ENCODE measurements at regions of chrX and their contacts with region 1.

Region 1: GRCh38 chrX:41333744-41334259 is at the start of gene DDX3X:
- DNase-seq: peak; percentile 89
- ATAC-seq: peak; percentile 62
- H3K4me3 Mint-ChIP-seq: peak within 1 kb of the TSS; percentile 90
- H3K27ac Mint-ChIP-seq: peak within 1 kb of the TSS; percentile 99
- H3K4me1 Mint-ChIP-seq: peaks cover 20% of the 10 kb centered on the region
- H3K27me3 Mint-ChIP-seq: no peaks in the 10 kb centered on the region
- total RNA-seq, gene DDX3X: 118 to 207 TPM

Region 2: GRCh38 chrX:40580537-40581335 is 753.1 kb before region 1 on chrX and contains the start of gene ATP6AP2:
- CTCF ChIA-PET with region 1: no interaction called
- POLR2A ChIA-PET with region 1: interaction called, 3 read pairs
- intact Hi-C with region 1: loop called in 1 of 2 experiments (anchors 5 kb)
- DNase-seq: peak; percentile 94
- ATAC-seq: peak; percentile 98
- H3K4me3 Mint-ChIP-seq: peak within 1 kb of the TSS; percentile 77
- H3K27ac Mint-ChIP-seq: peak within 1 kb of the TSS; percentile 86
- H3K4me1 Mint-ChIP-seq: peaks cover 29% of the 10 kb centered on the region
- H3K27me3 Mint-ChIP-seq: no peaks in the 10 kb centered on the region
- total RNA-seq, gene ATP6AP2: 39.9 to 52.2 TPM

Region 3: DNA sequence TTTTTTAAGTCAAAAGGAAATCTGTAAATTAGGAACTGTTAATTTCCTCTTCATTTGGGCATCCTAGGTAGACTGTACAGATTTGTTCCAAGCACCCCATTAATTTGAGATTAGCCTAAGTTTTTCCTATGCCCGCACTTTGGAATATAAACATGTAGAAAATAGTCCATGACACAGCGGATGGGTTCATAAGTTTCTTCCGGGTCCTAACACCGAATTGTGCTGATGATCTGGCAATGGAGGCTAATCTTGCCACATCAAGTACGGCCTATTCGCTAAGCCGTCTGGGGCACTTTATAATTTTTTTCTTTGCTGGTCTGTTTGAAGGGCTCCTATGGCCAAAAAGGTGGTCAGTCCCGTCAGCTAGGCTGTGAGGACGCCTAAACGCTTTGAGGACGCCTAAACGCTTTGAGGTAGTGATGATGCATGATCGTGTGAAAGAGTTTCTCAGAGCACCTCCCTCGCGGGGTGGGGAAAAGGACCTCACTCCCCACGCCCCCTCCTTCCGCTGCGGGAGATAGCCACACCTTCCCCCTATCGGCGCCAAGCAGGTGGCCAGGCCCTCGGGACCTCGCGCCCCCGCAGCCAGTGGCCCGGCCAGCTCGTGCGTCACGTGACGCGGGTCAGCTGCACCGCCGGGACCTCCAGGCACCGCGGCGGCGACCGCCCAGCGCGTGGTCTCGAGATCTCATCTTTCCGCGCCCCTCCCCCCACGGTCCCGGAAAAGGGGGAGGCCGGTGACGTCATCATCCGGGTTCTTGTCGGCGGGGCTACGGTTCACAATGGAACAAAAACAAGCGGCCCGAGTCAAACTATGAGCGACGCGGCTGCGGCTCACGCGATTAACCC is 249.5 kb before region 1 on chrX:
- CTCF ChIA-PET with region 1: no interaction called
- POLR2A ChIA-PET with region 1: no interaction called
- intact Hi-C with region 1: loop called (anchors 1 to 5 kb)
- DNase-seq: peak; percentile 96
- ATAC-seq: peak; percentile 67
- H3K4me3 Mint-ChIP-seq: peak overlapping the region; percentile 80
- H3K27ac Mint-ChIP-seq: peak overlapping the region; percentile 99
- H3K4me1 Mint-ChIP-seq: peaks cover 14% of the 10 kb centered on the region
- H3K27me3 Mint-ChIP-seq: no peaks in the 10 kb centered on the region

Region 4: DNA sequence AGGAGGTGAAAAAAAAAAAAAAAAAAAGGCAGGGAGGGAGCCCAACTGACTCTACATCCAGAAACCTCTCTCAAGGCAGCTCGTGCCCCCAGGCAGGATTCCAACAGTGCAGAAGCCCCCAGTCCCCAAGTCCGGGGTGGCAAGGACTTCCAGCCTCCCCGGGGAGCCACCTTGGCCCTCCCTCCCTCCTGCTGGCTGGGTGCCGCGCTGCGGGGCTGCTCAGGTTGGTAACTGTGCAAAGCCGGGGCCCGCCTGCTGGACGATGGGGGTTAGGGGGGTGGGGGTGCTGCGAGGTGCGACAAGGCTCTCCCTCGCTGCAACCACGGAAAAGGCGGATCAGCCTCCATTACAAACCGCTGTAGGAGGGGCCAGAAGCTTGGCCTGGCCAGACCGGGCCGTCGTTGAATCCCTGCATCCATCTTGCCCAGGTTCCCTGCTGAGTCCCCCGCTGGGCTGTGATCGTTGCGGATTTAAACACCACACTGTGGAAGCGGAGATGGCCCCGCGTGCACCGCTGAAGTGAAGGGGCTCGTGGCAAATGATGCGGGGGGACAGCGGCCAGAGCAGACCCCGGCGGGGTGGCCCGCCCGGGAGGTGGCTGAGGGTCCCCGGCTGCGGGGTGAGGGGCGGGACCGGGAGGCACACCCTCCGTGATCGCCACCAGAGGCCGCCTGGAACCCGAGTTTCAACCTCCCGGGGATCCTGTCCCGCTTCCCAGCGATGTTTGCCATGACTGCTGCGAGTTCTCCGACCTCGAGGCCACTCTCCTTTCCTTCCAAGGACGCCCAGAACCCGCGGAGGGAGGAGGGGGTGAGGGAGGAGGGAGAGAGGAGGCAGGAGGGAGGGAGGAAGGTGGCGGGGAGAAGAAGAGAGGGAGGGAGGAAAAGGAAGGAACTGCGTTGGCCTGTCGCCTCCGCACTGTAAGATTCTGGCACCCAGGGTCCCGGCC is 57.9 kb before region 1 on chrX:
- CTCF ChIA-PET with region 1: interaction called, 4 read pairs
- POLR2A ChIA-PET with region 1: no interaction called
- intact Hi-C with region 1: loop called in 1 of 2 experiments (anchors 2 kb)
- DNase-seq: peak; percentile 73
- ATAC-seq: peak; percentile 80
- H3K4me3 Mint-ChIP-seq: peak overlapping the region; percentile 64
- H3K27ac Mint-ChIP-seq: peak overlapping the region; percentile 70
- H3K4me1 Mint-ChIP-seq: peaks cover 4% of the 10 kb centered on the region
- H3K27me3 Mint-ChIP-seq: no peaks in the 10 kb centered on the region

Region 5: GRCh38 chrX:41441934-41442823 is 108.4 kb after region 1 on chrX:
- CTCF ChIA-PET with region 1: no interaction called
- POLR2A ChIA-PET with region 1: interaction called, 6 read pairs
- intact Hi-C with region 1: loop called (anchors 1 to 2 kb)
- DNase-seq: peak; percentile 92
- ATAC-seq: peak; percentile 94
- H3K4me3 Mint-ChIP-seq: peak overlapping the region; percentile 56
- H3K27ac Mint-ChIP-seq: peak overlapping the region; percentile 85
- H3K4me1 Mint-ChIP-seq: peaks cover 15% of the 10 kb centered on the region
- H3K27me3 Mint-ChIP-seq: no peaks in the 10 kb centered on the region

Region 6: GRCh38 chrX:41468647-41469323 is 135.0 kb after region 1 on chrX:
- CTCF ChIA-PET with region 1: no interaction called
- POLR2A ChIA-PET with region 1: no interaction called
- intact Hi-C with region 1: no loop called
- DNase-seq: no peak
- ATAC-seq: no peak
- H3K4me3 Mint-ChIP-seq: no peak overlapping the region
- H3K27ac Mint-ChIP-seq: no peak overlapping the region
- H3K4me1 Mint-ChIP-seq: peaks cover 3% of the 10 kb centered on the region
- H3K27me3 Mint-ChIP-seq: no peaks in the 10 kb centered on the region